ENCODE measurements at regions of chr1 and their contacts with region 1.

Region 1: GRCh38 chr1:179380299-179380698 is 14.5 kb downstream of the AXDND1 start:
- DNase-seq: no peak
- ATAC-seq: no peak
- H3K4me3 ChIP-seq: no peak overlapping the region
- H3K27ac ChIP-seq: no peak overlapping the region
- H3K4me1 ChIP-seq: no peaks in the 10 kb centered on the region
- H3K27me3 ChIP-seq: peaks cover 5 to 8% of the 10 kb centered on the region in 2 experiments; a peak in 4 of 5 replicates
- CTCF ChIP-seq: no peak
- EP300 ChIP-seq: no peak
- POLR2A ChIP-seq: no peak
- RAD21 ChIP-seq: no peak

Region 2: GRCh38 chr1:178796013-178796412 is 584.3 kb before region 1 on chr1:
- CTCF ChIA-PET with region 1: no interaction called
- POLR2A ChIA-PET with region 1: no interaction called
- in situ Hi-C with region 1: loop called (anchors 10 kb)
- intact Hi-C with region 1: no loop called
- DNase-seq: no peak
- ATAC-seq: no peak
- H3K4me3 ChIP-seq: no peak overlapping the region
- H3K27ac ChIP-seq: no peak overlapping the region
- H3K4me1 ChIP-seq: no peaks in the 10 kb centered on the region
- H3K27me3 ChIP-seq: no peaks in the 10 kb centered on the region
- CTCF ChIP-seq: no peak
- EP300 ChIP-seq: no peak
- POLR2A ChIP-seq: no peak
- RAD21 ChIP-seq: no peak

Region 3: DNA sequence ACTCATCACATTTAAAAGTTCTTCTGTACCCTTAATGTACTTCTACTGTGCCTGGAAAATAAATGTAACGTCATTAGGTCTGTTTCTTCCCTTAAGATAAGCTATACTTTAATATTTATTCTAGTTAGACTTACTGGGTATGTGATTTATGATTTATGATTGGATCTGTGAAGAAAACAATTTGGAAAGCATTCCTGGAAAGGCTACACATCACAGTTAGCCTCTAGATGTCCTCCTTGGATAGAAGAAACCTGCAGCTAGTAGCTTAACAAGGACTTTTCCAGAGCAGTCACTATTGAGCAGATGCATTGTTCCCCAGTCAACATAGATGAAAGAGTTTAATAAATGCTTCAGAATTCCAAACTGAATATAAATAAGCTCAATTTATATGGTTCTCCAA is 128.6 kb before region 1 on chr1:
- CTCF ChIA-PET with region 1: no interaction called
- POLR2A ChIA-PET with region 1: no interaction called
- in situ Hi-C with region 1: no loop called
- intact Hi-C with region 1: no loop called
- DNase-seq: peak in 2 of 4 experiments; percentile 28 to 44
- ATAC-seq: peak; percentile 84
- H3K4me3 ChIP-seq: no peak overlapping the region
- H3K27ac ChIP-seq: no peak overlapping the region
- H3K4me1 ChIP-seq: no peaks in the 10 kb centered on the region; a peak in 1 of 5 replicates
- H3K27me3 ChIP-seq: no peaks in the 10 kb centered on the region; a peak in 1 of 5 replicates
- CTCF ChIP-seq: peak; percentile 55 to 85 (median 56); a peak in 4 of 6 replicates
- EP300 ChIP-seq: no peak
- POLR2A ChIP-seq: no peak
- RAD21 ChIP-seq: peak; percentile 80 to 94

Region 4: DNA sequence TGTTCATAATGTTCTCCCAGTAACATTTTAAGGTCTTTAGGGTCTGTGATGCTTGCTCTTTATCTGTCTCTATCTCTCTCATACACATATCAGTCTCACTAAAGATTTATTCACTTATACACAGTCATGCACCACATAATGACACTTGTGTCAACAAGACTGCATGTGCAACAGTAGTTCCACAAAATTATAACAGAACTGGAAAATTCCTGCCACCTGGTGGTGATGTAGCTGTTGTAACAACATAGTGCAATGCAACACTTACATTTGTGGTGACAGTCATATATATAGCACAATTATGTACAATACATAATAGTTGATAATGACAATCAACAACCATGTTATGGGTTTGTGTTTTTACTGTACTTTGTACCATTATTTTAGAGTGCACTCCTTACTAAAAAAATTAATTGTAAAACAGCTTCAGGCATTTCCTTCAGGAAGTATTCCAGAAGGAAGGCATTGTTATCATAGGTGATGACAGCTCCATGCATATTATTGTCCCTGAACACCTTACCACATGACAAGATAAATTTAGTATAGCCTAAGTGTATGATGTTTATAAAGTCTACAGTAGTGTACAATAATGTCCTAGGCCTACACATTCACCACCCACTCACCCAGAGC is 219.4 kb after region 1 on chr1:
- CTCF ChIA-PET with region 1: no interaction called
- POLR2A ChIA-PET with region 1: no interaction called
- in situ Hi-C with region 1: no loop called
- intact Hi-C with region 1: loop called (anchors 10 kb)
- DNase-seq: peak; percentile 26 to 52 (median 28)
- ATAC-seq: peak; percentile 87
- H3K4me3 ChIP-seq: no peak overlapping the region
- H3K27ac ChIP-seq: no peak overlapping the region
- H3K4me1 ChIP-seq: no peaks in the 10 kb centered on the region
- H3K27me3 ChIP-seq: no peaks in the 10 kb centered on the region
- CTCF ChIP-seq: peak; percentile 44 to 61 (median 53)
- EP300 ChIP-seq: no peak
- POLR2A ChIP-seq: no peak
- RAD21 ChIP-seq: peak; percentile 23 to 71; a peak in 2 of 4 replicates

Measured in K562 (cell line).